ENCODE measurements at regions of chr22 and their contacts with region 1.

Region 1: DNA sequence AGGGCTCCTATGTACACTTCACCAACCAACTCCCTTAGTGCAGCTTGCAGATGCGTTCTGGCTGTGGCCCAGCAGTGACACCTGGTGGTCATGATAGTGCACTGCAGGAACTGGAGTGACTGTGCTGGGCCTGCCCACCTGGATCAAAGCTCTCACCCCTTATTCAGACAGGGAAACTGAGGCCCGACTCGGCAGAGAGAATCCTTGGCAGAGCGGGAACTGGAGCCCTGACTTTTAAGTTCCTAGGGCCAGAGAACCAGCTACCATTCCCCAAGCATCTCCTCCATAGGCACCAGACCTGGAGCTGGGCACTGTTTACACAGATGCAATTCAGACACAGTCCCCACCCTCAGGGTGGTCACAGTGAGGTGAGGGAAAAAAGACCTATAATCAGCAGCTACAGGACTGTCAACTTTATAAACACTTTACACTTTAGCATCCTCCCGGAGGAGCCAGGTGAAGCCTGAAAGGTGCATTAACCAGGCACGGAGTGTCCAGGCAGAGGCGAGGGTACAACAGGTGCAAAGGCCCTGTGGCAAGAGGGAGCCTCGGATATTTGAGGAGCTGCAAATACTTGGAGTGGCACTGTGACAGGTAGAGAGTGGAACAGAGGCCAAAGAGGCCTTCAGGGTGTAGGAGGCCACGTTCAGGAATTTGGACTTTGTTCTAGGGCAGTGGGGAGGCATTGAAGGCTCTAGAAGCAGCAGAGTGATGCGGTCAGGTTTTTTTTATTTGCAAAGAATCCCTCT is 22.0 kb downstream of the RHBDD3 start:
- DNase-seq: peak; percentile 65 to 81 (median 66)
- ATAC-seq: peak; percentile 74 to 95 (median 94)
- H3K4me3 ChIP-seq: no peak overlapping the region
- H3K27ac ChIP-seq: no peak overlapping the region
- H3K4me1 ChIP-seq: no peaks in the 10 kb centered on the region
- H3K27me3 ChIP-seq: no peaks in the 10 kb centered on the region
- CTCF ChIP-seq: peak; percentile 86 to 99 (median 97)
- POLR2A ChIP-seq: no peak

Region 2: DNA sequence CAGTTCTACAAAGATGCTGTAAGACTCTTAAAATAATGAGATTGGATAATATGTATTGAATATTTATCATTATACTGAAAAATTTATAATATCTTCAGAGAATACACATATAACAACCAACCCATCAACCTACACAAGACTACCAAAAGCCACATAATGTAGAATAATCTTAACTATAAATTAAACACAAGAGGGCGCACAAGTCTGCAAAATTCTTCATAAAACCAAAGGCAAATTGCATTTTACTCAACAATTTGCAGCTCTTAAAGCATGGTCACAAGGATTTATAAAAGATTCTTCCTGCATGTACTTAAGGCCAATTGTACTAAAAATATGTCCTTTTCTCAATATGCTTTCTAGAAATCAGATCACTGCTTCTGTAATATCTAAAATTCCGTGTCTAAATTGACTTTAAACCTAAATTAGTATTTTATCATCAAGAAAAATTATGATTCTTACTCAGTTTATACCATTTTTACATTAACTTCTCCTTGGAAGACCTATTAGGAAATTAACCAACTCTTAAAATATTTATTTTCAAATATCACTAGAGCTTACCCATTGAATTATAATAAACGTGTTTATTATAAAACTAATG is 645.2 kb before region 1 on chr22:
- intact Hi-C with region 1: loop called in 6 of 10 experiments (anchors 5 to 10 kb)
- DNase-seq: no peak
- ATAC-seq: peak in 1 of 4 donors; percentile 39
- H3K4me3 ChIP-seq: no peak overlapping the region
- H3K27ac ChIP-seq: no peak overlapping the region
- H3K4me1 ChIP-seq: no peaks in the 10 kb centered on the region
- H3K27me3 ChIP-seq: no peaks in the 10 kb centered on the region
- CTCF ChIP-seq: peak; percentile 26 to 77 (median 54)
- POLR2A ChIP-seq: no peak

Region 3: DNA sequence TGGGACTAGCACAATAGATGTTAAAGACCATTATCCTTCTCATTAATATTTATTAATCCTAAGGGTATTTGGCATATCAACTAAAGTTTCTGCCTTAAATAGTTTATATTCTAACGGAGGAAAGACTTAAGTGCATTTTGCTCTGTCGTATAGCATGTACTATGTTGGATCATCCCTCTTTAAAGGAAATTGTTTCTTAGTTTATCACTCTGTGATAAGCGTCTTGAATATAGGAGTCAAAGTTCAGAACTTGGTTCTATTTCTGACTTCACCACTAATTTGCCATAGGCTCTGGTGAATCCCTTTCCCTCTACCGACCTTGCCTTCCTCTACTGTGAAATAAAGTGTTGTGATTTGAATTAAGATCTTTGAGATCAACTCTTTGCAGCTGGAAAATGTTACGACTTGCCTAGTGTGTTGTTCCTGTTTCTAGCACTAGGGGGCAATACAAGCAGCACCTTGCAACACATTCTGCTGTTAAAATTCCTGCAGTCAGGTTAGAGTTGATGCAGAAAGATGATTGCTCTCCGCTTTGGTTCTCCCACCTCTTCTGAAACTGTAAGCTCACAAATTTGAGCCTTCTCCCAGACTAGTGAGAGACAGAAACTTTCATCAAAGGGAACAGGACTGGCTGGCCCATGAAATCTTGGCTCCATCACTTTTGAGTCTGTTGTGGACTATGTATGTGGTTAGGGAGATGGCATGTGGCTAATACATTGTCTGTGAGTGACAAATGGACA is 390.3 kb before region 1 on chr22:
- intact Hi-C with region 1: loop called in 9 of 10 experiments (anchors 2 to 10 kb)
- DNase-seq: peak in 2 of 5 donors; percentile 30 to 40
- ATAC-seq: peak; percentile 37 to 75 (median 62)
- H3K4me3 ChIP-seq: no peak overlapping the region
- H3K27ac ChIP-seq: no peak overlapping the region
- H3K4me1 ChIP-seq: peaks cover 0 to 6% (median 0%) of the 10 kb centered on the region in 12 donors
- H3K27me3 ChIP-seq: no peaks in the 10 kb centered on the region
- CTCF ChIP-seq: peak; percentile 83 to 97 (median 90)
- POLR2A ChIP-seq: no peak

Region 4: GRCh38 chr22:29040385-29041275 is 205.2 kb before region 1 on chr22:
- intact Hi-C with region 1: loop called in 5 of 10 experiments (anchors 5 to 10 kb)
- DNase-seq: peak in 4 of 5 donors; percentile 39 to 61 (median 52)
- ATAC-seq: peak in 3 of 4 donors; percentile 69 to 84 (median 76)
- H3K4me3 ChIP-seq: no peak overlapping the region
- H3K27ac ChIP-seq: no peak overlapping the region
- H3K4me1 ChIP-seq: peaks cover 0 to 10% (median 0%) of the 10 kb centered on the region in 12 donors
- H3K27me3 ChIP-seq: no peaks in the 10 kb centered on the region
- CTCF ChIP-seq: peak; percentile 93 to 99 (median 96)
- POLR2A ChIP-seq: no peak

Region 5: DNA sequence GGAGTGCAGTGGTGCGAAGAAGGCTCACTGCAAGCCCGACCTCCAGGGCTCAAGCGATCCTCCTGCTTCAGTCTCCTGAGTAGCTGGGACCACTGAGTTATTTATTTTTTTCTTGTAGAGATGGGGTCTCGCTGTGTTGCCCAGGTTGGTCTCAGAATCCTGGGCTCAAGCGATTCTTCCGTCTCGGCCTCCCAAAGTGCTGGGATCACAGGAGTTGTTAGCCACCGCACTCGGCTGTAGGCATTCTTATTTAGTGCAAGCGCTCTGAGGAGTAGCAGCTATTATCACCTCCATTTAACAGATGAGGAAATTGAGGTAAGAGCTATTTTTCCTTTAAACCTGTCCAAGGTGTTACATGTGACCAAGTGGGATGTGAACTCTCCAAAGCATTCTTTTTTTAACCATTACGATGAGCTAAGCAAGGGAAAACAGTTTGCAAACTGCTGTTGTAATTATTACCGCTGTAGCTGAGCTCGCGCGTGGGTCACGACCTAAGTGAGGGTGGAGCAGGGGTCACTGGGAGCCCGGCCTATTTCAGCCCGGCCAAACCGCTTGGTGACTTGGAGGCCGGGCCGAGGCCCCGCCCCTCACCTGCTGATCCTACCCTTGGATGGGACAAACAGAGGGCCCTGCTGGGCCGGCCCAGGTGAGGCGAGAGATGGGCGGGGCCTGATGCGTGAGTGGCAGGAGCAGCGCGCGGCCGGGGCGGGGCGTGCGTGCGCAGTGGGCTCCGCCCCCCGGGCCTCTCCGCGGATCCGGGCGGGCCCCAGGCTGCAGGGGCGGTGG is 173.4 kb before region 1 on chr22:
- intact Hi-C with region 1: loop called in 2 of 10 experiments (anchors 10 kb)
- DNase-seq: peak; percentile 86 to 93 (median 87)
- ATAC-seq: peak; percentile 72 to 95 (median 92)
- H3K4me3 ChIP-seq: peak overlapping the region in 11 of 12 donors; percentile 24 to 98 (median 75)
- H3K27ac ChIP-seq: peak overlapping the region in 1 of 12 donors; percentile 41
- H3K4me1 ChIP-seq: peaks cover 0 to 54% (median 19%) of the 10 kb centered on the region in 12 donors
- H3K27me3 ChIP-seq: peaks cover 0 to 46% (median 0%) of the 10 kb centered on the region in 9 donors
- CTCF ChIP-seq: no peak
- POLR2A ChIP-seq: no peak

Region 6: GRCh38 chr22:29154364-29155048 is 91.3 kb before region 1 on chr22:
- intact Hi-C with region 1: loop called in 5 of 10 experiments (anchors 5 to 10 kb)
- DNase-seq: peak; percentile 76 to 92 (median 76)
- ATAC-seq: peak; percentile 30 to 81 (median 79)
- H3K4me3 ChIP-seq: peak overlapping the region in 9 of 12 donors; percentile 6 to 46 (median 24)
- H3K27ac ChIP-seq: peak overlapping the region in 1 of 12 donors; percentile 9
- H3K4me1 ChIP-seq: peaks cover 0 to 49% (median 15%) of the 10 kb centered on the region in 12 donors
- H3K27me3 ChIP-seq: no peaks in the 10 kb centered on the region
- CTCF ChIP-seq: peak; percentile 84 to 98 (median 94)
- POLR2A ChIP-seq: no peak

Region 7: GRCh38 chr22:29202212-29203192 is 43.3 kb before region 1 on chr22:
- intact Hi-C with region 1: loop called in 4 of 10 experiments (anchors 5 kb)
- DNase-seq: peak; percentile 59 to 85 (median 62)
- ATAC-seq: peak; percentile 43 to 83 (median 56)
- H3K4me3 ChIP-seq: no peak overlapping the region
- H3K27ac ChIP-seq: peak overlapping the region in 10 of 12 donors; percentile 35 to 78 (median 64)
- H3K4me1 ChIP-seq: peaks cover 0 to 29% (median 19%) of the 10 kb centered on the region in 12 donors
- H3K27me3 ChIP-seq: peaks cover 0 to 15% (median 0%) of the 10 kb centered on the region in 9 donors
- CTCF ChIP-seq: peak in 7 of 12 donors; percentile 7 to 35 (median 17)
- POLR2A ChIP-seq: no peak